ENCODE measurements at regions of chr3 and their contacts with region 1.

Region 1: DNA sequence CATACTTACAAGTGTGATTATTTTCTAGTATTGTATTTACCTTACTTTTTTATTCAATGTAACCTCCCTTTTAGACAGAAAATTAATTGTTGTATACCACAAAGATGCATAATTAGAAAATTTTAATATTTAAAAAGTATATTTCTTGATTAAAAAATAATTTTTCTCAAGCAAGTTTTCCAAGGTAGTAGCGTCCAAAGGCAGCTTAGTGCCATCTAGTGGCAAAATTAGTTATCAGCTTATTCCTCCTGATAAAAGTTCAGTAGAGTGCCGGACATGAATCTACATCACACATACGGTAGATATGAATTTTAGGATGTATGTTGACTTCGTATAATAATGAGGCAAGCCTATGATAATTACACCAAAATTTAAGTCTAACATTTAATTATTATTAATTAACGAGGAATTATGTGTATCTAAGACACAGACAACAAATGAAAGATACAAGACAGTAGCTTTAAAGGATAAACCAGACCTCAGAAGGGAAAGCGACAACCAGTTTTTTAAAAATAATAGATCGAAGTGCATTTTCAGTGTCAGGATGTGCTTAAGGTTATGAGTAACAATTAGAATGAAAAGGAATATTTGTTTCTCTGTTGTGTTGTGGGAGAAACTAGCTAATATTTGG is 405.9 kb downstream of the ROBO1 start:
- DNase-seq: no peak
- H3K4me3 ChIP-seq: no peak overlapping the region
- H3K27ac ChIP-seq: no peak overlapping the region
- H3K4me1 ChIP-seq: no peaks in the 10 kb centered on the region; a peak in 1 of 7 replicates
- H3K27me3 ChIP-seq: no peaks in the 10 kb centered on the region
- CTCF ChIP-seq: peak in 2 of 3 experiments; percentile 44 to 55; a peak in 2 of 4 replicates
- EP300 ChIP-seq: no peak
- POLR2A ChIP-seq: no peak
- RAD21 ChIP-seq: peak; percentile 81 to 85

Region 2: DNA sequence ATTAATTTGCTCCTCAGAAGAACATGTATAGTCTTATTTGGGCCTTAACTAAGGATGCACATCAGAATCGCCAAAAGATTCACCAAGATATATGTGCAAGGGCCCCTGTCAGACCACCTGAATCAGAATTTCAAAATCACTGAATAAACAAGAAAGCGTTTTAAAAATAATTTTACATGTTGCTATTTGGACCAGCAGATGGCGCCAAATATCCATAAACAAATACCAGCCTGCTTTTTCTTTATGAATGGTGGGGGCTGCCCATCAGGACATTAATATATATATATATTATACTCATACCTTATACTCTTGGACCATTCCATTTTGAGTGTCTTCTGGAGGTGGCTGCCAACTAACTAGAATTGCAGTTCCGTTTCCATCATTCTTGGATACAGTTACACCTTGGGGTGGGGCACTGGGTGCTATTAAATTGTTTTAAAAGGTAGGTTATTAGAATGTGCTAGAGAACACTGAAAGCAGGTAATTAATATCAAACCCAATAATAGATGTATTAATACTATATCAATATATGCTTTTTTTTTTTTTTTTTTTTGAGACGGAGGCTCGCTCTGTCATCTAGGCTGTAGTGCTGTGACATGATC is 702.4 kb before region 1 on chr3:
- CTCF ChIA-PET with region 1: interaction called, 10 read pairs
- POLR2A ChIA-PET with region 1: no interaction called
- DNase-seq: no peak
- H3K4me3 ChIP-seq: no peak overlapping the region
- H3K27ac ChIP-seq: no peak overlapping the region
- H3K4me1 ChIP-seq: no peaks in the 10 kb centered on the region
- H3K27me3 ChIP-seq: no peaks in the 10 kb centered on the region
- CTCF ChIP-seq: peak in 2 of 3 experiments; percentile 32 to 53; a peak in 2 of 4 replicates
- EP300 ChIP-seq: no peak
- POLR2A ChIP-seq: no peak
- RAD21 ChIP-seq: peak; percentile 71 to 76

Region 3: GRCh38 chr3:79383402-79384012 is 21.6 kb after region 1 on chr3:
- CTCF ChIA-PET with region 1: interaction called, 12 read pairs
- POLR2A ChIA-PET with region 1: no interaction called
- DNase-seq: no peak
- H3K4me3 ChIP-seq: no peak overlapping the region
- H3K27ac ChIP-seq: no peak overlapping the region
- H3K4me1 ChIP-seq: peaks cover 0 to 2% (median 0%) of the 10 kb centered on the region in 4 experiments; a peak in 1 of 7 replicates
- H3K27me3 ChIP-seq: no peaks in the 10 kb centered on the region
- CTCF ChIP-seq: no peak
- EP300 ChIP-seq: no peak
- POLR2A ChIP-seq: no peak
- RAD21 ChIP-seq: no peak

Measured in H1 (cell line).